T-cell (primary cell): ENCODE measurements at regions of chr1 and their contacts with region 1.

Region 1: GRCh38 chr1:206030714-206031113 is 7.0 kb upstream of the CTSE start:
- DNase-seq: peak in 34 of 35 experiments; percentile 28 to 75 (median 45)
- ATAC-seq: peak; percentile 79 to 87 (median 83)
- H3K4me3 ChIP-seq: no peak overlapping the region
- H3K4me3 Mint-ChIP-seq: no peak overlapping the region
- H3K27ac ChIP-seq: no peak overlapping the region
- H3K27ac Mint-ChIP-seq: no peak overlapping the region
- H3K4me1 ChIP-seq: peaks cover 2 to 8% of the 10 kb centered on the region in 2 experiments
- H3K4me1 Mint-ChIP-seq: peaks cover 0 to 14% (median 8%) of the 10 kb centered on the region in 3 donors
- H3K27me3 ChIP-seq: peaks cover 0 to 10% of the 10 kb centered on the region in 2 experiments
- H3K27me3 Mint-ChIP-seq: peaks cover 10 to 11% of the 10 kb centered on the region in 2 donors

Region 2: GRCh38 chr1:206082831-206083695 is 52.3 kb after region 1 on chr1:
- CTCF ChIA-PET with region 1: no interaction called
- POLR2A ChIA-PET with region 1: no interaction called
- DNase-seq: no peak
- ATAC-seq: no peak
- H3K4me3 ChIP-seq: no peak overlapping the region
- H3K4me3 Mint-ChIP-seq: no peak overlapping the region
- H3K27ac ChIP-seq: no peak overlapping the region
- H3K27ac Mint-ChIP-seq: no peak overlapping the region
- H3K4me1 ChIP-seq: peaks cover 2 to 13% of the 10 kb centered on the region in 2 experiments
- H3K4me1 Mint-ChIP-seq: peaks cover 17 to 19% (median 18%) of the 10 kb centered on the region in 3 donors
- H3K27me3 ChIP-seq: peaks cover 0 to 3% of the 10 kb centered on the region in 2 experiments
- H3K27me3 Mint-ChIP-seq: no peaks in the 10 kb centered on the region

Region 3: DNA sequence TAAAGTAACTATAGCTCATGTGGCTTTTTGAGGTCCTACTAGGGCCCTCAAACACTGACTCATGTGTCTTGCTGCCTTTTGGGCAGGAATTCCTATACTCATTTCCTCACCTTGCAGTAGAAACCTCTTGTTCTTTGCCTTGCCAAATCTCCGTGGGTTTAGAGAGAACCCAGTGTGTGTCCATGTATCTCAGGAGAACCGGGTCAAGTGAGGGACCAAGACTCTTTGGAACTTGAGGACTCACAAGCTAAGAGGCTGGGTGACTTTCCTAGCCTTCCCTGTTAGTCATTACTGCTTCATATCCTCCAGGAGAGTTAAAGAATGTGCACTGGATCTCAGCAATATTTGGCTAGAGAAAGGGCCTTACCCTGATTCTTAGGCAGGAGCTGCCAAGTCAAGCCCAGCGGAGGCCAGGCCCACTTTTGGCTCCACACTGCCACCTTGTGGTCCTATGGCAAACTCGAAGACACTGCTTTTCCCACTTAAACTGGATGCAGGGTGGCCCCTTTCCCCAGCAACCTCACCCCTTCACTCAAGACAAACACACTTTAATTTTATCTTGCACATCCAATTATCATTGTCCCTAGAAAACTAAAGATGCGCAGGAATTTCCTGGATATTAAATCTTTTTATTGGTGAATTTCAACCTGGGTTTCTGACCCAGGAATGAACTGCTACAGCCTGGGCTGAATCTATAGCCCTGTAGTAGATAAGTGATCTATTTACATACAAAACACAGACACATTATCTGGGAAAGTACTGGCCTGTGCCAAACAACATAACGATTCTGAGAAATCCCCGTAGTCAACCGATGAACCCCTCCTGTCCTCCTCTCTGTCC is 75.8 kb after region 1 on chr1:
- CTCF ChIA-PET with region 1: interaction called, 3 to 31 read pairs
- POLR2A ChIA-PET with region 1: no interaction called
- DNase-seq: peak; percentile 40 to 86 (median 66)
- ATAC-seq: peak; percentile 75 to 85 (median 82)
- H3K4me3 ChIP-seq: no peak overlapping the region
- H3K4me3 Mint-ChIP-seq: no peak overlapping the region
- H3K27ac ChIP-seq: no peak overlapping the region
- H3K27ac Mint-ChIP-seq: peak overlapping the region in 1 of 2 donors; percentile 39
- H3K4me1 ChIP-seq: no peaks in the 10 kb centered on the region
- H3K4me1 Mint-ChIP-seq: peaks cover 0 to 12% (median 0%) of the 10 kb centered on the region in 3 donors
- H3K27me3 ChIP-seq: peaks cover 0 to 5% of the 10 kb centered on the region in 2 experiments
- H3K27me3 Mint-ChIP-seq: peaks cover 0 to 5% of the 10 kb centered on the region in 2 donors

Region 4: GRCh38 chr1:206575165-206575893 is 544.6 kb after region 1 on chr1:
- CTCF ChIA-PET with region 1: no interaction called
- POLR2A ChIA-PET with region 1: no interaction called
- DNase-seq: peak in 31 of 35 experiments; percentile 34 to 85 (median 58)
- ATAC-seq: peak; percentile 75 to 81 (median 77)
- H3K4me3 ChIP-seq: peak overlapping the region; percentile 8 to 35
- H3K4me3 Mint-ChIP-seq: peak overlapping the region; percentile 73 to 96 (median 74)
- H3K27ac ChIP-seq: peak overlapping the region; percentile 94
- H3K27ac Mint-ChIP-seq: peak overlapping the region; percentile 97 to 99
- H3K4me1 ChIP-seq: peaks cover 82 to 98% of the 10 kb centered on the region in 2 experiments
- H3K4me1 Mint-ChIP-seq: peaks cover 99 to 100% (median 99%) of the 10 kb centered on the region in 3 donors
- H3K27me3 ChIP-seq: no peaks in the 10 kb centered on the region
- H3K27me3 Mint-ChIP-seq: no peaks in the 10 kb centered on the region